Activated B cell treated with CpG ODN at 0.5 μM for 24 hours (primary cell): ENCODE measurements at regions of chr2 and their contacts with region 1.

Region 1: GRCh38 chr2:145593832-145594614 is 1074.1 kb upstream of the ZEB2 start:
- DNase-seq: no peak
- ATAC-seq: no peak
- H3K4me3 Mint-ChIP-seq: peak overlapping the region; percentile 6
- H3K27ac Mint-ChIP-seq: peak overlapping the region; percentile 83
- H3K4me1 Mint-ChIP-seq: peaks cover 74% of the 10 kb centered on the region
- H3K27me3 Mint-ChIP-seq: no peaks in the 10 kb centered on the region
- CTCF ChIP-seq: no peak

Region 2: DNA sequence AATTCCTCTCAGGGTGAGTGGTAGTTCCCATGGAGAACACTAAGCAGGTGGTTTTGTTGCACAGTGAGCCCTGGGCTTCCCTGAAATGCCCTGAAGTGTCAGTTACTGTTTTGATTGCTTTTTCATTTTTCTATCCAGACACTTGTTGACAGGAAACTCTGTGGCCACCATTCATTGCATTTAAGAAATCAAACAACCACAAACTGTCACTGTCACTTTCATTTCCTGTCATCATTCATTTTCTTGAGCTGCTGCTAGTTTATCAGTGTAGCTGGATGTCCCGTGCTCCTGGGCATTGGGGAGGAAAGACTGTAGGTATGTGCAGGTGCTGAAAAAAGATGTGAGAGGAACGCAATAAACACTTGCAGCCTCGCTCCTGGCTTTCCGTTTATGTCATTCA is 182.5 kb before region 1 on chr2:
- CTCF ChIA-PET with region 1: no interaction called
- POLR2A ChIA-PET with region 1: interaction called, 3 read pairs
- intact Hi-C with region 1: loop called (anchors 2 kb)
- DNase-seq: no peak
- ATAC-seq: peak; percentile 82
- H3K4me3 Mint-ChIP-seq: peak overlapping the region; percentile 74
- H3K27ac Mint-ChIP-seq: peak overlapping the region; percentile 65
- H3K4me1 Mint-ChIP-seq: peaks cover 35% of the 10 kb centered on the region
- H3K27me3 Mint-ChIP-seq: peaks cover 3% of the 10 kb centered on the region
- CTCF ChIP-seq: no peak

Region 3: GRCh38 chr2:145538661-145539350 is 55.2 kb before region 1 on chr2:
- CTCF ChIA-PET with region 1: no interaction called
- POLR2A ChIA-PET with region 1: no interaction called
- intact Hi-C with region 1: no loop called
- DNase-seq: no peak
- ATAC-seq: no peak
- H3K4me3 Mint-ChIP-seq: no peak overlapping the region
- H3K27ac Mint-ChIP-seq: no peak overlapping the region
- H3K4me1 Mint-ChIP-seq: no peaks in the 10 kb centered on the region
- H3K27me3 Mint-ChIP-seq: no peaks in the 10 kb centered on the region
- CTCF ChIP-seq: no peak

Region 4: GRCh38 chr2:145609951-145610350 is 15.9 kb after region 1 on chr2:
- CTCF ChIA-PET with region 1: no interaction called
- POLR2A ChIA-PET with region 1: no interaction called
- intact Hi-C with region 1: loop called (anchors 2 kb)
- DNase-seq: no peak
- ATAC-seq: no peak
- H3K4me3 Mint-ChIP-seq: no peak overlapping the region
- H3K27ac Mint-ChIP-seq: no peak overlapping the region
- H3K4me1 Mint-ChIP-seq: peaks cover 6% of the 10 kb centered on the region
- H3K27me3 Mint-ChIP-seq: no peaks in the 10 kb centered on the region
- CTCF ChIP-seq: no peak

Region 5: GRCh38 chr2:145644820-145645302 is 50.8 kb after region 1 on chr2:
- CTCF ChIA-PET with region 1: interaction called, 3 read pairs
- POLR2A ChIA-PET with region 1: interaction called, 7 read pairs
- intact Hi-C with region 1: loop called (anchors 1 kb)
- DNase-seq: no peak
- ATAC-seq: peak; percentile 86
- H3K4me3 Mint-ChIP-seq: peak overlapping the region; percentile 70
- H3K27ac Mint-ChIP-seq: peak overlapping the region; percentile 92
- H3K4me1 Mint-ChIP-seq: peaks cover 47% of the 10 kb centered on the region
- H3K27me3 Mint-ChIP-seq: no peaks in the 10 kb centered on the region
- CTCF ChIP-seq: no peak

Region 6: GRCh38 chr2:145692971-145693478 is 99.0 kb after region 1 on chr2:
- CTCF ChIA-PET with region 1: no interaction called
- POLR2A ChIA-PET with region 1: interaction called, 3 read pairs
- intact Hi-C with region 1: loop called (anchors 1 kb)
- DNase-seq: no peak
- ATAC-seq: peak; percentile 86
- H3K4me3 Mint-ChIP-seq: peak overlapping the region; percentile 71
- H3K27ac Mint-ChIP-seq: peak overlapping the region; percentile 89
- H3K4me1 Mint-ChIP-seq: peaks cover 55% of the 10 kb centered on the region
- H3K27me3 Mint-ChIP-seq: no peaks in the 10 kb centered on the region
- CTCF ChIP-seq: no peak